Activated CD4-positive, alpha-beta T cell treated with anti-CD3 and anti-CD28 coated beads for 36 hours (primary cell): ENCODE measurements at regions of chr11 and their contacts with region 1.

Region 1: GRCh38 chr11:44727373-44728287 is 868 bp downstream of the TSPAN18 start:
- DNase-seq: peak; percentile 87
- ATAC-seq: peak; percentile 78
- H3K4me3 Mint-ChIP-seq: peak overlapping the region; percentile 74
- H3K27ac Mint-ChIP-seq: peak overlapping the region; percentile 73
- H3K4me1 Mint-ChIP-seq: peaks cover 39% of the 10 kb centered on the region
- H3K27me3 Mint-ChIP-seq: peaks cover 25% of the 10 kb centered on the region

Region 2: GRCh38 chr11:44621140-44621681 is 106.4 kb before region 1 on chr11:
- CTCF ChIA-PET with region 1: interaction called, 3 read pairs
- POLR2A ChIA-PET with region 1: no interaction called
- intact Hi-C with region 1: loop called in 1 of 2 experiments (anchors 10 kb)
- DNase-seq: peak; percentile 78
- ATAC-seq: peak; percentile 52
- H3K4me3 Mint-ChIP-seq: no peak overlapping the region
- H3K27ac Mint-ChIP-seq: no peak overlapping the region
- H3K4me1 Mint-ChIP-seq: peaks cover 38% of the 10 kb centered on the region
- H3K27me3 Mint-ChIP-seq: no peaks in the 10 kb centered on the region

Region 3: GRCh38 chr11:44673688-44674087 is 53.9 kb before region 1 on chr11:
- CTCF ChIA-PET with region 1: no interaction called
- POLR2A ChIA-PET with region 1: no interaction called
- intact Hi-C with region 1: loop called in 1 of 2 experiments (anchors 10 kb)
- DNase-seq: no peak
- ATAC-seq: no peak
- H3K4me3 Mint-ChIP-seq: no peak overlapping the region
- H3K27ac Mint-ChIP-seq: no peak overlapping the region
- H3K4me1 Mint-ChIP-seq: peaks cover 18% of the 10 kb centered on the region
- H3K27me3 Mint-ChIP-seq: no peaks in the 10 kb centered on the region

Region 4: DNA sequence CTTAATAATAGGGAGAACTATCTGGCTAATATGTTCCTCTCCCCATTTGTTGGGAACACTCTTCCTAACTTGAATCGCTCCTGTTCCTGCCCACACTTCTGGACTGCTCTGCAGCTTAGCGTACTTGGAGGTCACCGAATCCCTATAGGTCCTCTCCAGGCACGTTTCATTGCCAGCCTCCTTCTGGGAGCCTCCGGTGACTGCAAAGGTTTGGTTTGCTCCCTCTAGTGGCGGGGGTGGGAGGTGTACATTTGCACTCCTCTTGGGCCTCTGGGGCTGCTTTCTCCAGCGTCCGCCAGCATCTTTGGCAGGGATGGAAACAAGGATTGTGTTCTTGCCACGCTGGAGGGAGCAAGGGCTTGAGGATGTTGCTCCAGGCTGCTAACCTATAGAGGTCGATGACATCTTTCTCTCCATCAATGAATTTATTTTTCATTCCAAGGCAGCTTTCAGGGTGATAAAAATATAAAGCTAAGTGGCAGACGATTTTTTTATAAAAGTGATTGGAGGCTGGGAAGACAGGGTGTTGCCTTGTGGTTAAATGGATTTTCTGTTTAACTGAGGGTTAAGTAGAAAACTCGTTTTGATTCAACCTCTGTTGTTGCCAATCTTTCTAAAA is 47.8 kb after region 1 on chr11:
- CTCF ChIA-PET with region 1: interaction called, 3 read pairs
- POLR2A ChIA-PET with region 1: no interaction called
- intact Hi-C with region 1: loop called (anchors 1 to 2 kb)
- DNase-seq: peak; percentile 72
- ATAC-seq: peak; percentile 64
- H3K4me3 Mint-ChIP-seq: no peak overlapping the region
- H3K27ac Mint-ChIP-seq: no peak overlapping the region
- H3K4me1 Mint-ChIP-seq: peaks cover 5% of the 10 kb centered on the region
- H3K27me3 Mint-ChIP-seq: no peaks in the 10 kb centered on the region

Region 5: DNA sequence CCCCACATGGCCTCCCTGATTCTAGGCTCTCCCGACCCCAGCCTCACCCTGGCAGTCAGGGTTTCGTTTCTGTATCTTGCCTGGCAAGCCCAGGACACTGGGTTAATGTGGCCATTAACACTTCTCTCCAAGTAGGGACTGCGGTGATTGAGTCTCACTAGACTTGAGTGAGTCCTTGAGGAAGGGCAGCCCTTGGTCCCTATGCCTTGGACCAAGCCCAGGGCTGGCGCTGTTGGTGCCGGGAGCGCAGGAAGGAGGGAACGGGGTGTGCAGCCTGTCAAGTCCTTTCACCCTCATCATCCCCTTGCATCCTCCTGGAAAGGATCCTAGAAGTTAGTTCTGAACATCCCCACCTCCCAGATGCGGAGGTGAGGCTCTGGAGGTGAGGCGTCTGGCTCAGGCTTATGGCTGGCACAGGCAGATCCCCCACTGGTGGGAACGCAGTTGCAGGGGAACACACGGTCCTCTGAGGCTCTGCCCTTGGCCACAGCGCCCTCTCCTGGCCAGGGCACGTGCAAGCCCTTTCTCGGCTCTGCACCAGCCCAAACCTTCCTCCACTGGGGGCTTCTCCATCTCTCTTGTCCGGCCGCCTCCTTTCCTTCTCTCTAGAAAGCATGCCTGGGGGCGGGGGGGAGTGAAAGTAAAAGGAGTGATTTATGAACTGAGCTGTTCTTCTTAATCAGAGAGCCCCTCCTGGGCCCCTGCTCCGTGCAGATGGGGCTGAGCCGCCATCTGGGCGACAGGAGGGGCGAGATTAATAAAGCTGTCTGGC is 166.4 kb after region 1 on chr11:
- CTCF ChIA-PET with region 1: interaction called, 4 read pairs
- POLR2A ChIA-PET with region 1: no interaction called
- intact Hi-C with region 1: loop called (anchors 1 kb)
- DNase-seq: peak; percentile 79
- ATAC-seq: peak; percentile 93
- H3K4me3 Mint-ChIP-seq: no peak overlapping the region
- H3K27ac Mint-ChIP-seq: no peak overlapping the region
- H3K4me1 Mint-ChIP-seq: peaks cover 1% of the 10 kb centered on the region
- H3K27me3 Mint-ChIP-seq: no peaks in the 10 kb centered on the region

Region 6: DNA sequence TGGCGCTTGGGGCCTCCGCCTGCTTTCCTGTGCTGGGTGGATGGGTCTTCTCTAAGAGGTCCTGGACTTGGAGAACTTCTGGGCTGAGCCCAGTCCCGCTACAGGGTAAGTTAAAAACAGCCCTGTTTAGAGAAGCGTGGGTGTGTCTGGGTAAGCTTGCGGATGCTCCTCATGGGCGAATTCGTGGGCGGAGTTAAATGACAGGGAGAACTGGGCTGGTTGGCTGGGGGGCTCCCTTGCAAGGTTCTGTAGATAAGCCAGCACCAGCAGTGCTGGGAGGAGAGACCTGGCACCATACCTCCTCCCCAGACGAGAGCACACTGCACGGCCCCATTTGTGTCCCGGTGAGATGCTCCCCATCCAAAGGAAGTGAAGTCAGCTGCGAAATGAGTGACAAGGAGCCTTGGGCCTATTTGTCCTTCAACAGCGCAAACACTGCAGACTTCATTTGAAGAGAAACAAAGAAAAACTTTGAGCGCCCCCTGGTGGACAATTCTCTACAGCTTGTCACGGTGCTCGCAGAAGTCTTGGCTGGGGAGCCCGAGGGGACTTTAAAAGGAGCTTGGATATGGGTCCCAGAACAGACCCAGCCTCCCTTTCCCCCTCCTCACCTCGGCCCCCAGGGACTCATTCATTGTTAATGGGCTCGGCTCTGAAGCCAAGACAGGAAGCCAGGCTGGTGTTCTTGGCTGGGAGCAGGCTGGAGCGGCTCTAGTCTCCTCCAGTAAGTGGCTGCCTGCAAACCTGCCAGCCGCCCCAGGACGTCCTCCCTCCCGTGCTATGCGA is 183.6 kb after region 1 on chr11:
- CTCF ChIA-PET with region 1: interaction called, 10 read pairs
- POLR2A ChIA-PET with region 1: no interaction called
- intact Hi-C with region 1: loop called (anchors 1 to 5 kb)
- DNase-seq: peak; percentile 93
- ATAC-seq: peak; percentile 91
- H3K4me3 Mint-ChIP-seq: no peak overlapping the region
- H3K27ac Mint-ChIP-seq: no peak overlapping the region
- H3K4me1 Mint-ChIP-seq: peaks cover 3% of the 10 kb centered on the region
- H3K27me3 Mint-ChIP-seq: no peaks in the 10 kb centered on the region

Region 7: GRCh38 chr11:45102810-45103621 is 375.4 kb after region 1 on chr11:
- CTCF ChIA-PET with region 1: no interaction called
- POLR2A ChIA-PET with region 1: no interaction called
- intact Hi-C with region 1: loop called in 1 of 2 experiments (anchors 5 kb)
- DNase-seq: peak; percentile 85
- ATAC-seq: peak; percentile 98
- H3K4me3 Mint-ChIP-seq: peak overlapping the region; percentile 47
- H3K27ac Mint-ChIP-seq: peak overlapping the region; percentile 59
- H3K4me1 Mint-ChIP-seq: peaks cover 18% of the 10 kb centered on the region
- H3K27me3 Mint-ChIP-seq: peaks cover 7% of the 10 kb centered on the region